Activated CD4-positive, alpha-beta T cell treated with anti-CD3 and anti-CD28 coated beads, Interleukin-2, amount 10 ng/mL, durations not matched to agents 24 days and 14 days (primary cell): ENCODE measurements at regions of chr21 and their contacts with region 1.

Region 1: GRCh38 chr21:14523234-14523633 is 22.9 kb downstream of the SAMSN1 start:
- DNase-seq: peak; percentile 81
- H3K4me3 Mint-ChIP-seq: peak overlapping the region; percentile 75
- H3K27ac Mint-ChIP-seq: peak overlapping the region; percentile 86
- H3K4me1 Mint-ChIP-seq: peaks cover 56% of the 10 kb centered on the region
- H3K27me3 Mint-ChIP-seq: no peaks in the 10 kb centered on the region

Region 2: GRCh38 chr21:14382835-14383594 is 140.2 kb before region 1 on chr21 and contains the start of gene HSPA13:
- intact Hi-C with region 1: loop called (anchors 5 kb)
- DNase-seq: peak; percentile 100
- H3K4me3 Mint-ChIP-seq: peak within 1 kb of the TSS; percentile 94
- H3K27ac Mint-ChIP-seq: peak within 1 kb of the TSS; percentile 96
- H3K4me1 Mint-ChIP-seq: peaks cover 35% of the 10 kb centered on the region
- H3K27me3 Mint-ChIP-seq: peaks cover 2% of the 10 kb centered on the region
- total RNA-seq, gene HSPA13: 40.9 and 41.6 TPM in 2 replicates

Region 3: GRCh38 chr21:14487490-14488432 is 35.5 kb before region 1 on chr21:
- intact Hi-C with region 1: loop called (anchors 1 kb)
- DNase-seq: no peak
- H3K4me3 Mint-ChIP-seq: peak overlapping the region; percentile 28
- H3K27ac Mint-ChIP-seq: peak overlapping the region; percentile 87
- H3K4me1 Mint-ChIP-seq: peaks cover 60% of the 10 kb centered on the region
- H3K27me3 Mint-ChIP-seq: no peaks in the 10 kb centered on the region

Region 4: GRCh38 chr21:14572204-14572780 is 49.1 kb after region 1 on chr21:
- intact Hi-C with region 1: no loop called
- DNase-seq: no peak
- H3K4me3 Mint-ChIP-seq: peak overlapping the region; percentile 64
- H3K27ac Mint-ChIP-seq: peak overlapping the region; percentile 80
- H3K4me1 Mint-ChIP-seq: peaks cover 44% of the 10 kb centered on the region
- H3K27me3 Mint-ChIP-seq: no peaks in the 10 kb centered on the region

Region 5: DNA sequence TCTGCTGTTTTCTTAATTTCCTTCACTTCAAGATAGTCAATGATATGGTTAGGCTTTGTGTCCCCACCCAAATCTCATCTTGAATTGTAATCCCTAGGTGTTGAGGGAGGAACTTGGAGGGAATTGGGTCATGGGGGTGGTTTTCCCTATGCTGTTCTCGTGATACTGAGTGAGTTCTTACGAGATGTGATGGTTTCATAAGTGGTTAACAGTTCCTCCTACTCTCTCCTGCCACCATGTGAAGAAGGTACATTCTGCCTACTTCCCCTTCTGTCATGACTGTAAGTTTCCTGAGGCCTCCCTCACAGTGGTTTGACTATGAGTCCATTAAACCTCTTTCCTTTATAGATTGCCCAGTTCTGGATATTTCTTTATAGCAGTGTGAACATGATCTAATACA is 96.9 kb after region 1 on chr21:
- intact Hi-C with region 1: loop called (anchors 1 kb)
- DNase-seq: no peak
- H3K4me3 Mint-ChIP-seq: no peak overlapping the region
- H3K27ac Mint-ChIP-seq: peak overlapping the region; percentile 73
- H3K4me1 Mint-ChIP-seq: peaks cover 25% of the 10 kb centered on the region
- H3K27me3 Mint-ChIP-seq: no peaks in the 10 kb centered on the region

Region 6: DNA sequence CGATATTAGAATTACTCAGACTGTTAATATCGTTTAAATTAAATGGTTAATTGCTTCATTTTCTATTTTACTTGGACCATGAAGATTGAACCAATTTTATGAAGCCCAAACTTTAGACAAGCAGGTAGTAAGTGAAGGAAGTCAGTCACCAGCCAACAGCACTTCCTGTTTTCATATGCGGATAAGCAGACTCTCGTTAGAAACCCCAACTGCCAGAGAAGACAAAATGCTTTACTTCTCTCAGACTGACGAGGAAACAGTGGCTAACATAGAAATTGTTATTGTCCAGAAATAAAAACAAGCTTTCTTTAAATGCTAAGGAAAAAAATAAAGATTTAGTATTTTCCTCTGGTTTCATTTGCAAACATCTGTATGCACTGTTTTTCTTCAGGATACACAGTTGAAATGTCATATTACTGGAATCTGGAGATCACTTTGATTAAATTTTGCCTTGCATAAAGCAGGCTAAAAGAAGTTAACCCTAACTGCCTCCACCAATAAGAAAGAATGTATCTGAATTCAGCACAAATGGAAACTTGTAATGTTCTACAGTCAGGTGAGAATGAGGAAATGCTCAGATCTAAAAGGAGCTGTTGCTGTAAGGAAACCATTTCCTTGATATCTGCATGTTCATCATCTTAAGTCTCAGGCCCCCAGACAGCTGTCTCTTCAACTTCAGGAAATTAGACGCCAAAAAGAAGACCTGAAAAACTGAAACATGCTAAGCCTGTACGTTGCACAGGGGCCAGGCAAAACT is 152.7 kb after region 1 on chr21:
- intact Hi-C with region 1: loop called (anchors 5 kb)
- DNase-seq: peak; percentile 75
- H3K4me3 Mint-ChIP-seq: peak overlapping the region; percentile 74
- H3K27ac Mint-ChIP-seq: peak overlapping the region; percentile 93
- H3K4me1 Mint-ChIP-seq: peaks cover 38% of the 10 kb centered on the region
- H3K27me3 Mint-ChIP-seq: no peaks in the 10 kb centered on the region

Region 7: GRCh38 chr21:14744368-14744767 is 221.1 kb after region 1 on chr21:
- intact Hi-C with region 1: no loop called
- DNase-seq: no peak
- H3K4me3 Mint-ChIP-seq: no peak overlapping the region
- H3K27ac Mint-ChIP-seq: no peak overlapping the region
- H3K4me1 Mint-ChIP-seq: peaks cover 4% of the 10 kb centered on the region
- H3K27me3 Mint-ChIP-seq: peaks cover 7% of the 10 kb centered on the region

Region 8: DNA sequence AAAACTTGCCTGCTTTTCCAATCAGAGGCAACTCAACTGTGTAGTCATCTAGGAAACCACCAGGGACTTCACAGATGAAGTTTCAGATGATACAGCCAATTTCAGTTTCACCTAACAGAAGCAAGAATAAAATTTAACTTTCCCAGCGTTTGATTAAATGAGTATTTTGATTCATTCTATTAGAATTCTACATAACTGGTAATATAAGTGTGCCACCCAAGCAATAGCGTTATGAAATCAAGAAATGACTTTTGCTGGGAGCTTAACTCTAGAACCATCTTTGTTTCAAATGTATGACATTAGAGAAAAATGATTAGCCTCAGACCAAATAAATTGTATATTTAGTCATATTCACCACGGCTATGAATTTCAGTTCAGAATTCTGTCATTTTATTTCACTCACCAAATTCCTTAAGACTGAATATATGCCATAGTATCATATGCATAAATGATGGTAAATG is 302.3 kb after region 1 on chr21:
- intact Hi-C with region 1: loop called (anchors 5 kb)
- DNase-seq: no peak
- H3K4me3 Mint-ChIP-seq: no peak overlapping the region
- H3K27ac Mint-ChIP-seq: no peak overlapping the region
- H3K4me1 Mint-ChIP-seq: peaks cover 4% of the 10 kb centered on the region
- H3K27me3 Mint-ChIP-seq: peaks cover 2% of the 10 kb centered on the region